Right lobe of liver (tissue), 6 donors: ENCODE measurements at regions of chr4 and their contacts with region 1.

Region 1: DNA sequence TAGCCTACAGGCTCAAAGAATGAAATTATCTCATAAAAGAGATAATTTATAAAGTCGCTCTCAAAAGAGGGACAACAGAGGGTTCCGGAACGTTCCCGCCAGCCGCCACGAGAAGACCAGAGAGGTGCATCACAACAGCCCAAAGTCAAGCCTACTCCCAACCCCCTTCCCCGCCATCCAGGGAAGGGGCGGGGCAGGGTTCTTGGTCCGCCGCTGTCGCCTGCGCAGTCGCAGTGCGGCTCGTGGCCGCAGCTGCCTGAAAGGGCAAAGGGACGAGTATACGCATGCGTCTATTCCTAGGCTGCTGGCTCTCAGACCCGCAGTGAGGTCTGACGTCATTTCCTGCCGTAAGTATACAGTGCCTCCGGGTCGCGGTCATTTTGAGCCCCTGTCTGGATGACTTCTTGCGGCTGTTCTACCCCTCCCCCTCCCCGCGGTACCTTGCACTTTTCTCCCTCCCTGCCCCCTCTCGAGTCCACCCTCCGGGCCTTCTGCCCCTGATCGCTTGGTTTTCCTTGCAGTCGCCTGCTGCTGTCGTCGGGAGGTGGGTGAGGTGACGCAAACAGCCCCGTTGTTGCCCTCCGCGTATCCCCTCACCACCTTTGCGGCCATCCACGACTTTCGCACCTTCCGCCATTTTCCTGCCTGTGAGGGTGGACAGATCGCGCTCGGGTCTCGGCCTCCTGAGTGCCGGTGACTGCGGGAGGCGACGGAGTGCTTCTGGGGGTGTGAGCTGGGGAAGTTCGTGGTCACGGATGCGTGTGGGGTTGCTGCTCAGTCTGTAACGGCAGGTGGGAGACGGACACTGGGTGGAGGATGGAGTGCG is at the start of gene OCIAD1:
- DNase-seq: peak; percentile 95 to 99 (median 97)
- ATAC-seq: peak; percentile 99 to 100 (median 99)
- H3K4me3 ChIP-seq: peak within 1 kb of the TSS; percentile 72 to 90 (median 83)
- H3K27ac ChIP-seq: peak within 1 kb of the TSS; percentile 95 to 98 (median 96)
- H3K4me1 ChIP-seq: peaks cover 0 to 8% (median 0%) of the 10 kb centered on the region in 4 donors
- H3K27me3 ChIP-seq: no peaks in the 10 kb centered on the region
- CTCF ChIP-seq: no peak
- POLR2A ChIP-seq: peak; percentile 59
- total RNA-seq, gene OCIAD1: 94.8 to 120 (median 108) TPM

Region 2: GRCh38 chr4:48906206-48907173 is 75.6 kb after region 1 on chr4 and contains the start of gene OCIAD2:
- intact Hi-C with region 1: loop called in 1 of 2 experiments (anchors 10 kb)
- DNase-seq: peak; percentile 81 to 87 (median 83)
- ATAC-seq: peak; percentile 84 to 88 (median 88)
- H3K4me3 ChIP-seq: peak within 1 kb of the TSS; percentile 50 to 91 (median 80)
- H3K27ac ChIP-seq: peak within 1 kb of the TSS; percentile 66 to 84 (median 81)
- H3K4me1 ChIP-seq: peaks cover 0 to 32% (median 7%) of the 10 kb centered on the region in 4 donors
- H3K27me3 ChIP-seq: no peaks in the 10 kb centered on the region
- CTCF ChIP-seq: peak in 3 of 4 donors; percentile 22 to 45 (median 33)
- POLR2A ChIP-seq: peak; percentile 57
- total RNA-seq, gene OCIAD2: 29.6 to 107 (median 68.3) TPM